ENCODE measurements at regions of chr9 and their contacts with region 1.

Region 1: DNA sequence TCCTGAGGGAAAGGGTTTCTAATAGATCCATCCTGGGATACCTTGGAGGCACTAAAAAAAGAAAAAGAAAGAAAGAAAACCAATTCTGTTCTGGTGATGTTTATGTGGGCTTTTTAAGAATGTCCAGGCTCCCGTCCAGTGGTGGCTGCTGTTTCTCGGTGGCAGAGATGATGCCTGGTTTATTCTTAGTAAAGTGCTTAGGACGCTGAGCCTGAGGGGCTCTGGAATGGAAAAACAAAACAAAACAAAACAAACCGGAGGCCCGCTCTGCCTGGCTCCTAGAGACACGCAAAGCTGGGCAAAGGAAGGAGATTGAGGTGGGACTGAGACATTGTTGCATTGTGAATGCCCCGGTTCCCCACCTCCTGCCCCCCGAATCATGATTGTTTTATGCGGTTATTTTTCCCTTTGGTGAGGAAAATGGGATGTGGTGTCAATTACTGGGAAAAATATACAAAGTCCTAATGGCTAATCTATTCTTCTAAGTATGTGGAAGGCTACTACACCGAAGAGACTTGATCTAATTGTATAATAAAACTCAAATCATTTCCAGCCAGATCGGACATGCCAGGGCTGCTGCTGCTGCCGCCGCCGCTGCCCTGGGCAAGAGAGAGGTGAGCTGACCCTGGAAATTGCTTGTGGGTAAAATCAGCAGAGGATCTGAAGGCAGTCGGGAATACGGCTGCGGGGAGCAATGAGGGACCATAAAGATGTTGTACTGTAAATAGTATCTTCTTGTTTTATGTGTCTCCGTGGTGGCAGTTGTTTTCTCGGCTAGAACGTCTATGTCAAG is 644.9 kb downstream of the CCDC171 start:
- DNase-seq: no peak
- H3K4me3 ChIP-seq: peak overlapping the region in 3 of 4 donors; percentile 2 to 22 (median 21)
- H3K27ac ChIP-seq: peak overlapping the region in 3 of 4 donors; percentile 73 to 81 (median 81)
- H3K4me1 ChIP-seq: peaks cover 0 to 61% (median 28%) of the 10 kb centered on the region in 4 donors
- H3K27me3 ChIP-seq: no peaks in the 10 kb centered on the region
- CTCF ChIP-seq: no peak
- EP300 ChIP-seq: no peak
- POLR2A ChIP-seq: no peak

Region 2: DNA sequence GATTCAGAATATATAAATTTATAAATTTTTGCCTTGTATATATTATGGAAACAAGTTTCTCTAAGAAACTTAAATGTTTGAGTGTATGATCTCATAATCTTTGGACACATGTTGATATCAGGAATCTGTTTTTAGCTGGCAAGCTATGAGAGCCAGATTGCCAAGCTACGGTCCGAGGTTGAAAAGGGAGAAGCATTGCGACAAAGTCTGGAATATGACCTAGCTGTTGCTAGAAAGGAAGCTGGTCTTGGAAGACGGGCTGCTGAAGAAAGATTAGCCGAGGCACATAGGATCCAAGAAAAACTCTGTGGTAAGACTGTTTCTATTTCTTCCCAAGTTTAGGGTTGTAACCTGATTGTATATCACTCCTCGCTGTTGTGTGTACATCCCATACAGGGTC is 619.1 kb before region 1 on chr9:
- intact Hi-C with region 1: no loop called
- DNase-seq: no peak
- H3K4me3 ChIP-seq: no peak overlapping the region
- H3K27ac ChIP-seq: no peak overlapping the region
- H3K4me1 ChIP-seq: no peaks in the 10 kb centered on the region
- H3K27me3 ChIP-seq: no peaks in the 10 kb centered on the region
- CTCF ChIP-seq: no peak
- EP300 ChIP-seq: no peak
- POLR2A ChIP-seq: no peak

Region 3: DNA sequence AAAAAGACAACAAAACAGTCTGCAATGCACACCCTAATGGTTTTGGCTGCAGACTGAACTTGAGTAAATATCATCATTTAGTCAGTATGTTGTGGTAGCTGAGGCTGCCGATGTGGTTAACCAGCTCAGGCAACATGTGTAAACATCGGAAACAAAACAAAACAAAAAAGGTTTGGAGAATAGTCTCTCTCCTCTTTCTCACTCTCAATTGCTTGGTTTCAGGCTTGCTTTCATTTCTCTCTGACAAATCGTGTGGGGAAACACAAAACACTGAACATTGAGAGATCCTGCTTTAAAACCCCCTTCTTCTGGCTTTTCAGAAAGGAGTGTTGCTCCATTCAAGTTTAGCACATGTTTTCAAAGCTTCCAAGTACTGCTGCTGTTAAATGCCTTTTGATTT is 219.4 kb after region 1 on chr9:
- intact Hi-C with region 1: loop called (anchors 5 kb)
- DNase-seq: no peak
- H3K4me3 ChIP-seq: peak overlapping the region in 2 of 4 donors; percentile 5 to 7
- H3K27ac ChIP-seq: peak overlapping the region in 3 of 4 donors; percentile 60 to 65 (median 62)
- H3K4me1 ChIP-seq: peaks cover 0 to 48% (median 32%) of the 10 kb centered on the region in 4 donors
- H3K27me3 ChIP-seq: no peaks in the 10 kb centered on the region
- CTCF ChIP-seq: no peak
- EP300 ChIP-seq: no peak
- POLR2A ChIP-seq: no peak

Region 4: GRCh38 chr9:16828340-16829281 is 630.8 kb after region 1 on chr9:
- intact Hi-C with region 1: loop called (anchors 5 kb)
- DNase-seq: peak; percentile 78
- H3K4me3 ChIP-seq: peak overlapping the region; percentile 9 to 49 (median 44)
- H3K27ac ChIP-seq: peak overlapping the region; percentile 74 to 86 (median 82)
- H3K4me1 ChIP-seq: peaks cover 0 to 83% (median 70%) of the 10 kb centered on the region in 4 donors
- H3K27me3 ChIP-seq: no peaks in the 10 kb centered on the region
- CTCF ChIP-seq: no peak
- EP300 ChIP-seq: no peak
- POLR2A ChIP-seq: no peak